ENCODE measurements at regions of chr11 and their contacts with region 1.

Region 1: DNA sequence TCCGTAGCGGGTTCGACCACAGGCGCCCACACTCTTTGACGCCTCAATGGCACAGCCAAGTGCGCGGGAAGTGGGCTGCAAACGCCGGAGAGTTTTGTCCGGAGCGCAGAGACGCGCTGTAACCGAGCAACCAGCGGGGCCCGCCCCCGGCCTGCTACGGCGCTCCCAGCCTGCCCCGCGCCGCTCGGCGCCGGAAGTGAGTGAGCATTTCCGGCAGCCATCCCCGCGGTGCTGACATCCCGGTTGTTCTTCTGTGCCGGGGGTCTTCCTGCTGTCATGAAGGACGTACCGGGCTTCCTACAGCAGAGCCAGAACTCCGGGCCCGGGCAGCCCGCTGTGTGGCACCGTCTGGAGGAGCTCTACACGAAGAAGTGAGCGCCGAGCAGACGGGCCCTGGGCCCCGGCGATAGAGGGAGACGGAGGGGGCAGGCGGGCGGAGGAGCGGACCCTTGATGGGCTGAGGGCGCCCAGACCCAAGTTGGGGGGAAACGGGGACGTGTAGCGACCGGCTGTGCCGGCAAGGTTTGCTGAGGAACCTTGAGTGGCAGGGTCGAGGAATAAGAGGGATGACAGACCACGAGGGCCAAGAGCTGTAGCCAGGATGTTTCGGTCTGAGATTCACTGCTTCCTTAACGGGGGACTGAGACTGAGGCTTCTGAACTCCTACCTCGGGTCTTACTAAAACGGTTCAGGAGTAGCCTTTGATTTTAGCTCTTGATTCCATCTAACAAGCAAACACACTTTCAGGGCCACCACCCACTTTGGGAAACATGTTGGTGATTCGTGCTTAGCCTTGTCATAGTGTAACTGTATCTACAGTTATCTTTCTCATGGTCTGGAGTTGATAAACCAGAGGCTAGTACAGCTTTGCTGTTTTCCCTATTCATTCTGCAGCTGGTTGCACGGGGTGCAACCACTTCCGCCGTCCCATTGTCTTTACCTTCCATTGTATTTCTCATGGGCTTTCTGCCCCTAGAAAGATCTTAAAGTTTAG is at the start of gene PSMD13:
- DNase-seq: peak; percentile 89
- H3K4me3 Mint-ChIP-seq: peak within 1 kb of the TSS; percentile 85
- H3K27ac Mint-ChIP-seq: peak within 1 kb of the TSS; percentile 95
- H3K4me1 Mint-ChIP-seq: peaks cover 45% of the 10 kb centered on the region
- H3K27me3 Mint-ChIP-seq: no peaks in the 10 kb centered on the region
- total RNA-seq, gene PSMD13: 206 to 210 TPM

Region 2: DNA sequence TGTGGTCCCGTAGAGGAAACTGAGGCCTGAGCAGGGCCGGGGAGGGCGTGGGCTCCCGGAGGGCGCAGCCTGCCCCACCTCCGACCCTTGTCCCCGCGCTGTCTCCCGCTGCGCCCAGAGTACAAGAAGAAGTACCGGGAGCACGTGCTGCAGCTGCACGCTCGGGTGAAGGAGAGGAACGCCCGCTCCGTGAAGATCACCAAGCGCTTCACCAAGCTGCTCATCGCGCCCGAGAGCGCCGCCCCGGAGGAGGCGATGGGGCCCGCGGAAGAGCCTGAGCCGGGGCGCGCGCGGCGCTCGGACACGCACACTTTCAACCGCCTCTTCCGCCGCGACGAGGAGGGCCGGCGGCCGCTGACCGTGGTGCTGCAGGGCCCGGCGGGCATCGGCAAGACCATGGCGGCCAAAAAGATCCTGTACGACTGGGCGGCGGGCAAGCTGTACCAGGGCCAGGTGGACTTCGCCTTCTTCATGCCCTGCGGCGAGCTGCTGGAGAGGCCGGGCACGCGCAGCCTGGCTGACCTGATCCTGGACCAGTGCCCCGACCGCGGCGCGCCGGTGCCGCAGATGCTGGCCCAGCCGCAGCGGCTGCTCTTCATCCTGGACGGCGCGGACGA is 43.0 kb after region 1 on chr11:
- CTCF ChIA-PET with region 1: no interaction called
- intact Hi-C with region 1: loop called (anchors 2 kb)
- DNase-seq: peak; percentile 65
- H3K4me3 Mint-ChIP-seq: peak overlapping the region; percentile 75
- H3K27ac Mint-ChIP-seq: peak overlapping the region; percentile 63
- H3K4me1 Mint-ChIP-seq: peaks cover 45% of the 10 kb centered on the region
- H3K27me3 Mint-ChIP-seq: peaks cover 19% of the 10 kb centered on the region

Region 3: GRCh38 chr11:288328-289144 is 51.5 kb after region 1 on chr11 and contains the start of gene PGGHG:
- CTCF ChIA-PET with region 1: no interaction called
- intact Hi-C with region 1: loop called (anchors 1 kb)
- DNase-seq: peak; percentile 36
- H3K4me3 Mint-ChIP-seq: peak within 1 kb of the TSS; percentile 98
- H3K27ac Mint-ChIP-seq: peak within 1 kb of the TSS; percentile 97
- H3K4me1 Mint-ChIP-seq: peaks cover 38% of the 10 kb centered on the region
- H3K27me3 Mint-ChIP-seq: peaks cover 2% of the 10 kb centered on the region
- total RNA-seq, gene PGGHG: 99.6 to 101 TPM

Region 4: DNA sequence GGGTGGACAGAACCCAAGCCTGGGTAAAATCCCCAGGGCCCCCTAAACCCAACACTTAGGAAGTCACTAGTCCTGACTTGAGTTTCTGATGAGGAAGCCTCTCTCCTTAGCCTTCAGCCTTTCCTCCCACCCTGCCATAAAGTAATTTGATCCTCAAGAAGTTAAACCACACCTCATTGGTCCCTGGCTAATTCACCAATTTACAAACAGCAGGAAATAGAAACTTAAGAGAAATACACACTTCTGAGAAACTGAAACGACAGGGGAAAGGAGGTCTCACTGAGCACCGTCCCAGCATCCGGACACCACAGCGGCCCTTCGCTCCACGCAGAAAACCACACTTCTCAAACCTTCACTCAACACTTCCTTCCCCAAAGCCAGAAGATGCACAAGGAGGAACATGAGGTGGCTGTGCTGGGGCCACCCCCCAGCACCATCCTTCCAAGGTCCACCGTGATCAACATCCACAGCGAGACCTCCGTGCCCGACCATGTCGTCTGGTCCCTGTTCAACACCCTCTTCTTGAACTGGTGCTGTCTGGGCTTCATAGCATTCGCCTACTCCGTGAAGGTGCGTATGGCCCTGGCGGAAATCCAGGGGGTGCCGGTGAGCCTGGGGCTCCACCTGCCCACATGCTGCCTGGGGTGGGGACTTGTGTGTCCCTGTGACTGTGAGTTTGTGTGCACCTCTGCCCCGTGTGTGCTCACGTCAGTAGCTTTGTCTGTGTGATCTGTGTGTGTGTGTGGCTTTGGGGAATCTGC is 76.9 kb after region 1 on chr11 and contains the start of gene IFITM1:
- CTCF ChIA-PET with region 1: no interaction called
- intact Hi-C with region 1: loop called (anchors 2 kb)
- DNase-seq: peak; percentile 77
- H3K4me3 Mint-ChIP-seq: peak within 1 kb of the TSS; percentile 93
- H3K27ac Mint-ChIP-seq: peak within 1 kb of the TSS; percentile 95
- H3K4me1 Mint-ChIP-seq: peaks cover 22% of the 10 kb centered on the region
- H3K27me3 Mint-ChIP-seq: no peaks in the 10 kb centered on the region
- total RNA-seq, gene IFITM1: 359 to 378 TPM

Region 5: GRCh38 chr11:355581-356458 is 118.7 kb after region 1 on chr11:
- CTCF ChIA-PET with region 1: no interaction called
- intact Hi-C with region 1: loop called (anchors 1 kb)
- DNase-seq: peak; percentile 93
- H3K4me3 Mint-ChIP-seq: peak overlapping the region; percentile 94
- H3K27ac Mint-ChIP-seq: peak overlapping the region; percentile 99
- H3K4me1 Mint-ChIP-seq: peaks cover 36% of the 10 kb centered on the region
- H3K27me3 Mint-ChIP-seq: no peaks in the 10 kb centered on the region

Region 6: GRCh38 chr11:747158-748006 is 510.3 kb after region 1 on chr11 and contains the start of gene TALDO1:
- CTCF ChIA-PET with region 1: no interaction called
- intact Hi-C with region 1: loop called (anchors 5 kb)
- DNase-seq: peak; percentile 86
- H3K4me3 Mint-ChIP-seq: peak within 1 kb of the TSS; percentile 84
- H3K27ac Mint-ChIP-seq: peak within 1 kb of the TSS; percentile 83
- H3K4me1 Mint-ChIP-seq: peaks cover 21% of the 10 kb centered on the region
- H3K27me3 Mint-ChIP-seq: no peaks in the 10 kb centered on the region
- total RNA-seq, gene TALDO1: 327 to 360 TPM

Region 7: DNA sequence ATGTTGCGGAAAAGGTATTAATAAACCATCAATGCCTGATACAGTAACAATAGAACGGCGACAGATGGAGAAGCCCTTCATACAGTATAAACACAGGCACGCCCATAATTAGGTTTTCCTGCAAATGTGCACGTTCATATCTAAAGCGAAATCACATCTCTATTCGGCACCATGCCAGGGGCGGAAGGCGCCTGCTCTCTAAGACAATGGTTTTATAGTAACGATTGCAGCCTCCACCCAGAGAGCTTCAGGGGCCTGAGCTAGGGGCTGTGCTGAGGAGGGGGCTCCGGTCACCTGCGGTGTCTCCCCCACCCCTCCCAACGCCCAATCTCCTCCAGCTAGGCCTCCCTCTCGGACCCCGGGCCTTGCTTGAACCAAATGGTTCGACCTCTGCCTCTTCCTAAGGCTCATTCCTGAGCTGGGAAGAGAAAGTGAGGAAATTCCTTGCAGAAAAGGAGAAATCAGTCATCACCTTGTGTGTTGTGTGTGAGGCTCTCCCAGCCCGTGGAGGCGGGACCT is 1402.1 kb after region 1 on chr11:
- CTCF ChIA-PET with region 1: no interaction called
- intact Hi-C with region 1: no loop called
- DNase-seq: peak; percentile 30
- H3K4me3 Mint-ChIP-seq: no peak overlapping the region
- H3K27ac Mint-ChIP-seq: no peak overlapping the region
- H3K4me1 Mint-ChIP-seq: no peaks in the 10 kb centered on the region
- H3K27me3 Mint-ChIP-seq: peaks cover 12% of the 10 kb centered on the region

Measured in activated naive CD4-positive, alpha-beta T cell treated with anti-CD3 and anti-CD28 coated beads for 36 hours (primary cell).